Pancreas (tissue), 10 donors: ENCODE measurements at regions of chr11 and their contacts with region 1.

Region 1: DNA sequence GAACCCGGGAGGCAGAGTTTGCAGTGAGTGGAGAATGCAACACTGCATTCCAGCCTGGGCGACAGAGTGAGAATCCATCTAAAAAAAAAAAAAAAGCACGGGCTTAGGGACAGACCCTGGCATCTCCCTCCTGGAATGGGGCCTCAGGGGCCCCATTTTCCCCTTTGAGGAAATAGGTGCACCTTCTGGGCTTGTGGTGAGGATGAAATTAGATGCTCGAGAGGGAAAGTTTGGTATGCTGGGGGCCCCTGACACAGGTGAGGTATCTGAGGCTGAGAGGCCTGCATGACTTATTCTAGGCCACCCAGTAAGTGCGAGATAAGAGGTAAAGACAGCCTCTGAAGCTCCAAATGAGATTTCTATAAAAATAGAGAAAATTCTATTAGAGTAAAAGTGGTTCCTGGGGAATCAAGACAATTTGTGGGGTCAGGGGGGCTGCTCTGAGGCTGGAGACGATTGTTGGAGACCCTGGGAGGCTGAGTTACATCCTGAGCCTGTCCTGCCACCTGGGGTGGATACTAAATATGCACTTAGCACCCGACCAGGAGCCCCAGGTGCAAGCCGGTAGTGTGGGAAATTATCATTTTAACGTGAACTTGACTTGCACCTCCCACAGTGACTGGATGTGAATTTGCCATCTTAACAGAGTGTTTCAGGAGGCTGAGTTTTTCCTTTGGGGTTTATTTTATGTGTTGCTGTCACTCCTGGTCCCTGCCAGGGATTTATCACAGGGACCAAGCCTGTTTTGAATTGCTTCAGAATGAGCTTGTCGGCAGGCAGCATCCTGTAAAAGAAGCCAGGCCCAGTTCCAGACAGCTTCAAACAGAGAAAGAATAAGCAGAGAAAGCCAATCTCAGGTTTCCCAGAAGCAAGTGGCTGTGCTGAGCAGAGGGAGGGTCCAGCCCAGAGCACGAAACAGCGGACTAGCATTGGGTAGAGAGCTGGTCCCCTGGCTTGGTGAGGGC is 48.4 kb upstream of the TSKU start:
- DNase-seq: no peak
- ATAC-seq: no peak
- H3K4me3 ChIP-seq: no peak overlapping the region
- H3K27ac ChIP-seq: no peak overlapping the region
- H3K4me1 ChIP-seq: no peaks in the 10 kb centered on the region
- H3K27me3 ChIP-seq: no peaks in the 10 kb centered on the region
- CTCF ChIP-seq: no peak

Region 2: DNA sequence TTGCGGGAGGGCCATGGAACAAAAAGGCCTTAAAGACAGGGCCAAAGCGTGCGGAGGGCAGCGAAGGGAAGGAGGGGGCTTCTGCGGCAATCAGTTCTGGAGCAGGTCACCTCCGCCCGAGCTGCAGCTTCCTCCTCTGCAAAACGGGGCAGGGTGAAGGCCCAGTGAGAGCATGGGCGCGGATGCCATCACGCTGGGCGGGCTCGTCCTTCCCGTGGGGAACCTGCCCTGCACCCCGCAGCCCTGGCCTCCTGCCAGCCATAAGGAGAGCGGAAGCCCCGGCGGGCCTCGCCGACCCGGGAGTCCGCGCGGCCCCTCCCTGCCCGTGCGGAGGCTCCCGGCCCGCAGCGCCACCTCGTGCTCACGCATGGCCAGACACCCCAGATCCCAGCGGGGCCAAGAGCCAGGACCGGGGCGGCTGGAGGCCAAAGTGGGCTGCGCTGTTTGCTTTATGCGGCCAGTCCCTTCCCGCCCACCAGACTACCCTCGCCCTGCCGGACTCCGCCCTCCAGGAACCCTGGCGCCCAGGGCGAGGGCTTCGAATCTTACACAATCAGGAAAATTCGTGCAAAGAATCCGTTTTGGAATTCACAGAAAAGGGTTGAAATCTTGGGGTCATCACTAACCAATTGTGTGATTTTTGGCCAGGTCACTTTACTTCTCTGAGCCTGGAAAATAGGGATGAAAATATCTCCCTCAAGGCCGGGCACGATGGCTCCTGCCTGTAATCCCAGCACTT is 64.5 kb after region 1 on chr11:
- intact Hi-C with region 1: loop called in 2 of 3 experiments (anchors 5 kb)
- DNase-seq: peak; percentile 75 to 95 (median 84)
- ATAC-seq: peak; percentile 55 to 87 (median 82)
- H3K4me3 ChIP-seq: peak overlapping the region in 1 of 4 donors; percentile 25
- H3K27ac ChIP-seq: peak overlapping the region in 2 of 4 donors; percentile 34 to 63
- H3K4me1 ChIP-seq: peaks cover 6 to 35% (median 30%) of the 10 kb centered on the region in 3 donors
- H3K27me3 ChIP-seq: no peaks in the 10 kb centered on the region
- CTCF ChIP-seq: peak; percentile 50 to 87 (median 80)

Region 3: GRCh38 chr11:76891278-76891677 is 156.5 kb after region 1 on chr11:
- intact Hi-C with region 1: loop called in 1 of 3 experiments (anchors 10 kb)
- DNase-seq: no peak
- ATAC-seq: no peak
- H3K4me3 ChIP-seq: no peak overlapping the region
- H3K27ac ChIP-seq: no peak overlapping the region
- H3K4me1 ChIP-seq: peaks cover 0 to 3% (median 0%) of the 10 kb centered on the region in 3 donors
- H3K27me3 ChIP-seq: no peaks in the 10 kb centered on the region
- CTCF ChIP-seq: no peak

Region 4: DNA sequence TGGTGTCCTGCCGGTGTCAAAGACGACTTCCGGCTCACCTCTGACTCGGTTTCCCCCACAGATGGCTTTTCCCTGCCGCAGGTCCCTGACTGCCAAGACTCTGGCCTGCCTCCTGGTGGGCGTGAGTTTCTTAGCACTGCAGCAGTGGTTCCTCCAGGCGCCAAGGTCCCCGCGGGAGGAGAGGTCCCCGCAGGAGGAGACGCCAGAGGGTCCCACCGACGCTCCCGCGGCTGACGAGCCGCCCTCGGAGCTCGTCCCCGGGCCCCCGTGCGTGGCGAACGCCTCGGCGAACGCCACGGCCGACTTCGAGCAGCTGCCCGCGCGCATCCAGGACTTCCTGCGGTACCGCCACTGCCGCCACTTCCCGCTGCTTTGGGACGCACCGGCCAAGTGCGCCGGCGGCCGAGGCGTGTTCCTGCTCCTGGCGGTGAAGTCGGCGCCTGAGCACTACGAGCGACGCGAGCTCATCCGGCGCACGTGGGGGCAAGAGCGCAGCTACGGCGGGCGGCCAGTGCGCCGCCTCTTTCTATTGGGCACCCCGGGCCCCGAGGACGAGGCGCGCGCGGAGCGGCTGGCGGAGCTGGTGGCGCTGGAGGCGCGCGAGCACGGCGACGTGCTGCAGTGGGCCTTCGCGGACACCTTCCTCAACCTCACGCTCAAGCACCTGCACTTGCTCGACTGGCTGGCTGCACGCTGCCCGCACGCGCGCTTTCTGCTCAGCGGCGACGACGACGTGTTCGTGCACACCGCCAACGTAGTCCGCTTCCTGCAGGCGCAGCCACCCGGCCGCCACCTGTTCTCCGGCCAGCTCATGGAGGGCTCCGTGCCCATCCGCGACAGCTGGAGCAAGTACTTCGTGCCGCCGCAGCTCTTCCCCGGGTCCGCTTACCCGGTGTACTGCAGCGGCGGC is 305.0 kb after region 1 on chr11:
- intact Hi-C with region 1: loop called in 1 of 3 experiments (anchors 5 kb)
- DNase-seq: peak in 5 of 6 donors; percentile 53 to 78 (median 61)
- ATAC-seq: peak; percentile 46 to 78 (median 74)
- H3K4me3 ChIP-seq: peak overlapping the region; percentile 16 to 54 (median 24)
- H3K27ac ChIP-seq: no peak overlapping the region
- H3K4me1 ChIP-seq: peaks cover 0 to 13% (median 8%) of the 10 kb centered on the region in 3 donors
- H3K27me3 ChIP-seq: peaks cover 0 to 6% (median 0%) of the 10 kb centered on the region in 4 donors
- CTCF ChIP-seq: peak in 3 of 4 donors; percentile 27 to 40 (median 36)